ENCODE measurements at regions of chr12 and their contacts with region 1.

Region 1: DNA sequence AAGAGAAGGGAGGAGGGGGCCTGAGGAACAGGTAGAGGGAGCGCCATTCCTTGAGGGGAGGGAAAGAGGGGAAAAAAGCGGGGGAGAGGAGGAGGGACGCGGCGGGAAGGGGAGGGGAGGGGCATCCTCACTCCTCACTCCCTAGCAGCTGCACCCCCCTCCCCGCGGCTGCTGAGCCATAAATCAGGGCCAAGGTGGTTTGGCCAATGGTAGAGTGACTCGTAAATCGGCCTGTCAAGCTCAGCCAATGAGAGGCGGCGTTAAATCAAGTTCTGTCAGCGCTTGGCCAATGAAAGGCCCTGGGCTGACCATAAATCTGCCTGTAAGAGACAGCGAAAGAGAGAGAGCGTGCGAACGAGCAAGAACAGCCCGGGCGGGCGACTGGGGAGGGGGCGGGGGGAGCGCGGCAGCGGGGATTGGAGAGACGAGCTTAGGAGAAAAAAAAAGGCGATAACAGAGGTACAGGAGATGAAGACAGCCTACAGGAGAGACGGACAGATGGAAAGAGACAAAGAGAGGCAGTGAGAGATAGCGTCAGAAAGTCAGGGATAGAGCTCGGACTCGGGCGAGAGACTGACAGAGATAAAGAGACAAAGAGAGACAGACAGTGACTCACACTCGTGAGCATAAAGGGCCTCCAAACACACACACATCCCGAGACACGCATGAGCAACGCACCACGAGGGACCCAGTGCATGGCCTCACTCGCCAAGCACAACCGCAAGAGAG is 5.1 kb downstream of the GPR84 start:
- DNase-seq: peak; percentile 98 to 99
- ATAC-seq: peak; percentile 97 to 98
- H3K4me3 ChIP-seq: peak overlapping the region; percentile 69 to 86 (median 76)
- H3K27ac ChIP-seq: peak overlapping the region; percentile 88 to 94 (median 89)
- H3K4me1 ChIP-seq: peaks cover 12 to 18% of the 10 kb centered on the region in 2 donors
- H3K27me3 ChIP-seq: no peaks in the 10 kb centered on the region
- CTCF ChIP-seq: peak in 1 of 5 experiments; percentile 6
- POLR2A ChIP-seq: peak; percentile 52 to 72

Region 2: GRCh38 chr12:54005853-54006686 is 353.1 kb before region 1 on chr12:
- in situ Hi-C with region 1: loop called in 2 of 4 experiments (anchors 25 kb)
- intact Hi-C with region 1: no loop called
- DNase-seq: peak; percentile 83 to 91
- ATAC-seq: peak; percentile 63 to 67
- H3K4me3 ChIP-seq: peak overlapping the region; percentile 24 to 82 (median 63)
- H3K27ac ChIP-seq: peak overlapping the region; percentile 94 to 100 (median 98)
- H3K4me1 ChIP-seq: peaks cover 31 to 64% of the 10 kb centered on the region in 2 donors
- H3K27me3 ChIP-seq: no peaks in the 10 kb centered on the region
- CTCF ChIP-seq: peak; percentile 91 to 99 (median 97)
- POLR2A ChIP-seq: no peak

Region 3: GRCh38 chr12:54220092-54220557 is 139.1 kb before region 1 on chr12:
- in situ Hi-C with region 1: loop called in 3 of 4 experiments (anchors 5 to 10 kb)
- intact Hi-C with region 1: loop called (anchors 2 kb)
- DNase-seq: peak in 1 of 2 donors; percentile 55
- ATAC-seq: peak; percentile 70 to 79
- H3K4me3 ChIP-seq: no peak overlapping the region
- H3K27ac ChIP-seq: no peak overlapping the region
- H3K4me1 ChIP-seq: peaks cover 12 to 15% of the 10 kb centered on the region in 2 donors
- H3K27me3 ChIP-seq: peaks cover 0 to 4% (median 3%) of the 10 kb centered on the region in 3 donors
- CTCF ChIP-seq: peak; percentile 67 to 84 (median 80)
- POLR2A ChIP-seq: no peak

Region 4: GRCh38 chr12:54251667-54252284 is 107.4 kb before region 1 on chr12:
- in situ Hi-C with region 1: no loop called
- intact Hi-C with region 1: loop called (anchors 1 kb)
- DNase-seq: no peak
- ATAC-seq: peak; percentile 55 to 75
- H3K4me3 ChIP-seq: no peak overlapping the region
- H3K27ac ChIP-seq: no peak overlapping the region
- H3K4me1 ChIP-seq: peaks cover 11 to 13% of the 10 kb centered on the region in 2 donors
- H3K27me3 ChIP-seq: no peaks in the 10 kb centered on the region
- CTCF ChIP-seq: peak; percentile 55 to 64 (median 59)
- POLR2A ChIP-seq: no peak

Region 5: DNA sequence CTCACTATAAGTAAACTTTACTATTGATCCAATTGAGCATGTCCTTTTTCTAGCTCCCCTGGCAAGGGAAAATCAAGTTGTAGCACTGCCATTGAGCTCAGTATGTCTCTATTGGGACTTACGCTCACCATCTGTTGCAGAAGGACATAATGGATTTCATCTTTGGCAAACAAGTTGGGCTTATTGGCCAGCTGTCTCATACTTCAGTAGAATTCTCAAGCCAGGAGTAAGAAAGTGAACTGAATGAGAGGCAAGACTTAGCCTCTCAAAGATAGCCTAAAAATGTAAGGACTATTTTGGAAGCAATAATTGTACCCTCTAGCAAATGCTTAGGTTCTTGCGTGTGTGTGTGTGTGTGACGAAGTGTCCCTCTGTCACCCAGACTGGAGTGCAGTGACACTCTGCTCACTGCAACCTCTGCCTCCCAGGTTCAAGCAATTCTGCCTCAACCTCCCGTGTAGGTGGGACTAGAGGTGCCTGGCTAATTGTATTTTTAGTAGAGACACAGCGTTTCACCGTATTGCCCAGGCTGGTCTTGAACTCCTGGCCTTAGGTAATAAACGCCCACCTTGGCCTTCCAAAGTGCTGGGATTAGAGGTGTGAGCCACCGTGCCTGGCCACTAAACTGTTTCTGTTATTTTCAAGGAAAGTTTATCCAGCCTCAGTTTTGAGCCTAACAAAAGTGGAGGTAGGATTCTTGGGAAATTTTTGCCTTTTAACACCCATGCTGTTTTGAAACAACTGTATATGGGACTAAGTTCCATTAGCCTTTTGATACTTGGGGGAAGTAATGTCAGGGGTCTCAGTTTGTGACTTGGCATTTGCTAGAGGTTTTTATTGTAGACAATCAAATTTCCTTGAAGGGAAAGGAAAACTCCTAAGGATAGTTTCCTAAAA is 71.7 kb before region 1 on chr12:
- in situ Hi-C with region 1: no loop called
- intact Hi-C with region 1: loop called (anchors 2 kb)
- DNase-seq: no peak
- ATAC-seq: peak in 1 of 2 donors; percentile 19
- H3K4me3 ChIP-seq: peak overlapping the region in 1 of 4 donors; percentile 0
- H3K27ac ChIP-seq: peak overlapping the region; percentile 77 to 87 (median 83)
- H3K4me1 ChIP-seq: peaks cover 59 to 68% of the 10 kb centered on the region in 2 donors
- H3K27me3 ChIP-seq: no peaks in the 10 kb centered on the region
- CTCF ChIP-seq: no peak
- POLR2A ChIP-seq: no peak

Region 6: GRCh38 chr12:54324617-54325441 is 34.4 kb before region 1 on chr12 and contains the start of gene COPZ1:
- in situ Hi-C with region 1: no loop called
- intact Hi-C with region 1: loop called (anchors 5 kb)
- DNase-seq: peak; percentile 96 to 99
- ATAC-seq: peak; percentile 99 to 100
- H3K4me3 ChIP-seq: peak within 1 kb of the TSS; percentile 79 to 86 (median 84)
- H3K27ac ChIP-seq: peak within 1 kb of the TSS; percentile 82 to 91 (median 88)
- H3K4me1 ChIP-seq: peaks cover 16 to 29% of the 10 kb centered on the region in 2 donors
- H3K27me3 ChIP-seq: no peaks in the 10 kb centered on the region
- CTCF ChIP-seq: peak; percentile 56 to 77 (median 67)
- POLR2A ChIP-seq: peak; percentile 71 to 73
- total RNA-seq, gene COPZ1: 91.8 to 145 (median 107) TPM